ENCODE measurements at regions of chr3 and their contacts with region 1.

Region 1: GRCh38 chr3:123706871-123707270 is 122.0 kb upstream of the HACD2 start:
- DNase-seq: no peak
- ATAC-seq: no peak
- H3K4me3 ChIP-seq: no peak overlapping the region
- H3K27ac ChIP-seq: no peak overlapping the region
- H3K4me1 ChIP-seq: no peaks in the 10 kb centered on the region
- H3K27me3 ChIP-seq: no peaks in the 10 kb centered on the region
- CTCF ChIP-seq: no peak
- POLR2A ChIP-seq: no peak

Region 2: DNA sequence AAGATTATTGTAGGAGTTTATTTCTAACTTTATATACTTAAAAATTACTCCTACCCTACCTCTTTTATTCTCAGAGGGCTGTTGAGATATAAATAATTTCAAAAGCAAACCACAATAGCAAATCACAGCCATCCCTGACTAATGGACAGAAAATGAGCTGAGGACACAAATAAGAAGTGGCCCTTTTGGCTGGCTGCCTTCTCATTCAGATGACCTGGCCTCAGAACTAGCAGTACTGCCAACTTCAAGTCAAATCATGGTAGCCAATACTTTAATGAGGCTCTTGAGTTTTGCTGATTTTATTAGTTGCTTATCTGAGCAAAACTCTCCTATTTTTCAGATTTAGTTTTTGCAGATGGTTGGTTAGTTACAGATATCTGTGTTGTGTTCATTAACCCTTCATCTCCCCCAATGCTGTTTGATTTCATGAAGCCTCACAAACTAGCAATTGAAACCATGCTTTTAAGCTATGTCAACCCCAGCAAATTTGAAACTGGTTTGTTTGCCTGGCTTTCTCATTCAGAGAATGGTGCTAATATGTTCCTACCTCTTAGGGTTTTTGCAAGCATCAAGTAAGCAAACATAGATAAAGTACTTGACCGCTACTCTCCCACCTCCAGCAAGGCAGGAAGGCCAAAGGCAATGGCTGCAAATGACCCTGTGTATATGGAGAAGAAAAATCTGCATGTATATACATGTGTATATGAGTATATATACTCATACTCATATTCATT is 48.6 kb before region 1 on chr3:
- intact Hi-C with region 1: loop called (anchors 5 kb)
- DNase-seq: peak in 3 of 4 donors; percentile 40 to 62 (median 54)
- ATAC-seq: no peak
- H3K4me3 ChIP-seq: no peak overlapping the region
- H3K27ac ChIP-seq: peak overlapping the region in 2 of 4 donors; percentile 5 to 8
- H3K4me1 ChIP-seq: peaks cover 8% of the 10 kb centered on the region
- H3K27me3 ChIP-seq: no peaks in the 10 kb centered on the region
- CTCF ChIP-seq: no peak
- POLR2A ChIP-seq: no peak